ENCODE measurements at regions of chr13 and their contacts with region 1.

Region 1: GRCh38 chr13:43132257-43132656 is 108.9 kb downstream of the DNAJC15 start:
- DNase-seq: peak in 1 of 5 donors; percentile 22
- ATAC-seq: peak; percentile 55 to 76 (median 74)
- H3K4me3 ChIP-seq: no peak overlapping the region
- H3K27ac ChIP-seq: no peak overlapping the region
- H3K4me1 ChIP-seq: peaks cover 0 to 18% (median 5%) of the 10 kb centered on the region in 12 donors
- H3K27me3 ChIP-seq: peaks cover 0 to 3% (median 0%) of the 10 kb centered on the region in 9 donors
- CTCF ChIP-seq: peak in 11 of 12 donors; percentile 14 to 65 (median 45)
- POLR2A ChIP-seq: no peak

Region 2: DNA sequence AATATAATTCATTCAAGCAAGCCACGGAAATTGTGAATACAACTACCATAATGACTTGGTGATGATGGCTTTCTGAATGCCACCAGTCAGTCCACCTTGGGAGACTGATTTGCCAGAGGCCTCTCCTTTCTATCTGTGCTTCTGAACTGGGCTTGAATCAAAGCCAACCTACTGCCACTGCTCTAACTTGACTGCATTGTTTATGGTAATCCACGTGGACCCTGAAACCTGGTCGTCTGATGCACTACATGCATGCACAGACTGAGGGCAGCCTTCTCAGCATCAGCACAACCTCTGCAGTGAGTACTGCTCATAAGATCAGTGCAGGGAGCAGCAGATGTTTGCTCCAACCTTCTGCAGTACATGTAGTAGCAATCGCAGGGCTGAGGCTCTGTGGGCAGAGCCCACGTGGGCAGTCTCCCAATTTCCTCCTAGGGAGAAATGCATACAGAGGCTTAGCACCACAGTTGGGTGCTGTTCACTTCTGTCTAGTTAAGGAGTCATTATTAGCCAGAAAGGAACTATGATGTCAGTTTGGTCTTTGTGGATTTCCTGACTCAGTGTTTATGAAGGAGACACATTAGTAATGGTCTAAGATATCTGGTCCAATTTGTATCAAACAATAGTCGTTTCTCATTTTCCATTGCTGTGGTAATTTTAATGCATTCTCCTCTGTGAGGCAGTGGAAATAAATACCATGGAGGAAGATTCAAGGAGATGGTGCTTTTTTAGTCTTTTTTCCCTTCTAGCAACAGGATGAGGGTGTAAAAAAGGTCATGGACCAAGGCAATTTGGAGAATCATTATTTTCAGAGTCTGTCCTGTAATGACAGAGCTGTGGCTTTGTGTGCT is 777.8 kb before region 1 on chr13:
- intact Hi-C with region 1: no loop called
- DNase-seq: peak in 1 of 5 donors; percentile 42
- ATAC-seq: peak in 3 of 4 donors; percentile 37 to 64 (median 60)
- H3K4me3 ChIP-seq: no peak overlapping the region
- H3K27ac ChIP-seq: peak overlapping the region in 1 of 12 donors; percentile 44
- H3K4me1 ChIP-seq: peaks cover 0 to 21% (median 0%) of the 10 kb centered on the region in 12 donors
- H3K27me3 ChIP-seq: no peaks in the 10 kb centered on the region
- CTCF ChIP-seq: no peak
- POLR2A ChIP-seq: no peak

Region 3: DNA sequence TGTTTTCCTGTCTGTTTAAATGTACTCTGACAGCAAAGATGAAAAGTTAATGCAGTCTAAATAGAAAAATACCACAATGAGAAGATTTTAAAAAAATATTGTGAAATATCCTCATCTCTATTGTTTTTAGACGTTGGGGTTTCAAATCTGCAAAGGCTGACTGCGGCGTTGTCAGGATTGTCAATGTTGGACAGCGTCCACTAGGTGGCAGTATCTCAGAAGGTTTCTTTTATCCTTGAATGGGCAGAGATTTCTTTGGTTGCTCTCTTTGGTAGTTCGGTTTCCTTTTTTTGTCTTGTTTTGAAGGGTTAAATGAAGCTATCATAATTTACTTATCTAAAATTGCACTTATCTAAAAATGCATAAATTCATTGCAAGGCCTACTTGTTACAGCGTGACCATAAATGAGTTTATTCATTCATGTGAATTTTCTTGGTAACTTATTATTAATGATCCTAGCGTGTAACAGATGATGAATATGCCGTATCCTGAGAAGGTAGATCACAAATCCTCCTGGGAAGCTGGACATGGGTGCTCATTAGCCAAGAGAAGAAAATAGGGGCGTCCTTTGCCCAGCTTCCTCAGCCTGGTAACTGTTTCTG is 537.2 kb before region 1 on chr13:
- intact Hi-C with region 1: loop called in 5 of 10 experiments (anchors 5 to 10 kb)
- DNase-seq: peak in 3 of 5 donors; percentile 23 to 37 (median 30)
- ATAC-seq: peak in 2 of 4 donors; percentile 50 to 63
- H3K4me3 ChIP-seq: no peak overlapping the region
- H3K27ac ChIP-seq: no peak overlapping the region
- H3K4me1 ChIP-seq: no peaks in the 10 kb centered on the region
- H3K27me3 ChIP-seq: peaks cover 0 to 27% (median 2%) of the 10 kb centered on the region in 9 donors
- CTCF ChIP-seq: peak; percentile 78 to 89 (median 85)
- POLR2A ChIP-seq: no peak

Region 4: DNA sequence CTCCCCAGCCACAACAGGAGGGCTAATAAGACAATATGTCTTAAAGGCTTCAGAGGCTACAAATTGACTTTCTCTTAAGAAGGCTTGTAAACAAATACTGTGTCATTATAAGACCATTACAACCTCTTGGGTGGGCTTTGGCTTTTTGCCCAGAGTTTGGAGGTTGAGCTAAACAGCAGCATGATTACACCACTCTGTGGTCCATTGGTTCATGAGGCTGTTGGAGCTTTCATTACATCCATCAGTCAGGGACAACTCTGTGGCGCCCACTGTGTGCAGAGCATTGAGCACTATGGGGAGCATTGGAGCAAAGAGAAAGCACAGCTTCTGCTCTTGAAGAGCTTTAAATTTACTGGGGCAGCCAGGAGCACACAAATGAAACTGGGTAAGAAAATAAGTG is 482.4 kb before region 1 on chr13:
- intact Hi-C with region 1: loop called in 2 of 10 experiments (anchors 10 kb)
- DNase-seq: no peak
- ATAC-seq: no peak
- H3K4me3 ChIP-seq: no peak overlapping the region
- H3K27ac ChIP-seq: no peak overlapping the region
- H3K4me1 ChIP-seq: no peaks in the 10 kb centered on the region
- H3K27me3 ChIP-seq: peaks cover 0 to 17% (median 4%) of the 10 kb centered on the region in 9 donors
- CTCF ChIP-seq: no peak
- POLR2A ChIP-seq: no peak

Region 5: GRCh38 chr13:42660333-42660965 is 471.8 kb before region 1 on chr13:
- intact Hi-C with region 1: loop called in 4 of 10 experiments (anchors 5 to 10 kb)
- DNase-seq: no peak
- ATAC-seq: no peak
- H3K4me3 ChIP-seq: no peak overlapping the region
- H3K27ac ChIP-seq: no peak overlapping the region
- H3K4me1 ChIP-seq: no peaks in the 10 kb centered on the region
- H3K27me3 ChIP-seq: peaks cover 0 to 19% (median 0%) of the 10 kb centered on the region in 9 donors
- CTCF ChIP-seq: peak in 9 of 12 donors; percentile 24 to 47 (median 32)
- POLR2A ChIP-seq: no peak

Region 6: GRCh38 chr13:42836930-42837690 is 295.1 kb before region 1 on chr13:
- intact Hi-C with region 1: loop called in 4 of 10 experiments (anchors 2 to 10 kb)
- DNase-seq: no peak
- ATAC-seq: peak in 1 of 4 donors; percentile 50
- H3K4me3 ChIP-seq: no peak overlapping the region
- H3K27ac ChIP-seq: no peak overlapping the region
- H3K4me1 ChIP-seq: peaks cover 0 to 5% (median 0%) of the 10 kb centered on the region in 12 donors
- H3K27me3 ChIP-seq: no peaks in the 10 kb centered on the region
- CTCF ChIP-seq: peak in 10 of 12 donors; percentile 9 to 48 (median 22)
- POLR2A ChIP-seq: no peak

Region 7: DNA sequence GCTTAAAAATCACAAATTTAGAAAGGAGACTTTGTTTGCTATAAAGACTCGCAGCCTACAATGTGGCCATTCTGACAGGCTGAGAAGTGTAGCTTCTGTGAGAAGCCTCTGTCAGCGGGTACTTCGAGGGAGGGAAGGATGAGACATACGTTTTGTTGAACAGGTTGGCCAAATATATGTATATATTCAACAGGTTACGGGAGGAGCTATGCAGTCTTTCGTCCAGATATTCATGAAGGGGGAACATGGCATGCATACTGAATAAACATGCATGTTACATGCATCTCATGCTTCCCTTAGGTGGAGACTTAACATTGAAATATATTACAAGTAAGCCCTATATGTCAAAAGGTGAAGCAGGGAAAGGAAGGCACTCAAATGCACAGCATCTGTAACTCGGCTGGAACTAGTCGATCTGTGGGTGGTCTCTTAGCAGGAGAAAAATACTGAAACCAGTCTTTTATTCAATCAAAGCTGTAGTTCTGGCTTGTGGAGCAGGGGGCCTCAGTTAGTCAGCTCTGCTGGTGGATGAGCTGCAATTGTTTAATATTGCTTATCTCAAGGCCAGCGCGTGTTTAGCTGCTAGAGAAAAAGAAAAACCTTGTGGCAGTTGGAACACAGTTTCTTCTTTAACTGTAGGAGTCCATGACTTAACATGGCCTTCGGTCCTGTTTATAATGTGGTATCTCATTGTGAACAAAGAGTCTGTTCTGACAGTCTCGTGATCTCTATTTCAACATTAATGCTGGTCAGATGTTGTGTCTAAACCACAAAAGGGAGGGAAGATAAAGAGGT is 256.6 kb before region 1 on chr13:
- intact Hi-C with region 1: no loop called
- DNase-seq: no peak
- ATAC-seq: no peak
- H3K4me3 ChIP-seq: no peak overlapping the region
- H3K27ac ChIP-seq: no peak overlapping the region
- H3K4me1 ChIP-seq: peaks cover 0 to 28% (median 0%) of the 10 kb centered on the region in 12 donors
- H3K27me3 ChIP-seq: no peaks in the 10 kb centered on the region
- CTCF ChIP-seq: peak in 2 of 12 donors; percentile 6 to 18
- POLR2A ChIP-seq: no peak

Region 8: DNA sequence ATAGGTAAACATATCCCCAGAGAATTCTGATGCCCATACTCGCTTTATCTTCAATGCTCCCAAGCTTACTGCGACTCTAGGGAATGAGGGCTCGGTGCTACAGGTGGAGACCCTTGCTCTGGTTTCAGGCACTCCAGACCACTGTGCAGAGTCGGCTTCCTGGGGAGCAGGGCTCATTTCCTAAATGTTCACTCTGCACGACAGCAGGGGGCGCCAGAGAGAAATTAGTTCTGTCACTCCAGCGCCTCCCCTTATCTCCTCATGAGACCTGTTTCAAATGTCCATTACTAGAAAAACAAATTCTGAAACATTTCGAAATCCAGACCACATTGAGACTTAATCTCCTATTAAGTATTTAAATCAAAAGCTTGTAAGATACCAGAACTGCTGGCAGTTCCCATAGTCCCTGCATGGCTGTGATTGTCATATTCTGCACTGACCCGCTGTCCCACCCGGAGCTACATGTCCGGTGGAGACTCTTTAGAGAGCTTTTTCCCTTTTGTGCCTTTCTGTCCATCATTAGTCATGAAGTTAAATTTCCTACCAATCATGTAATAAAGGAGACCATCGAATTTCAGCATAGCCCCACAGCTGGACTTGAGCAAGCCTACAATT is 162.6 kb before region 1 on chr13:
- intact Hi-C with region 1: loop called in 9 of 10 experiments (anchors 2 to 5 kb)
- DNase-seq: peak; percentile 70 to 86 (median 83)
- ATAC-seq: peak; percentile 71 to 92 (median 88)
- H3K4me3 ChIP-seq: no peak overlapping the region
- H3K27ac ChIP-seq: no peak overlapping the region
- H3K4me1 ChIP-seq: peaks cover 0 to 34% (median 10%) of the 10 kb centered on the region in 12 donors
- H3K27me3 ChIP-seq: no peaks in the 10 kb centered on the region
- CTCF ChIP-seq: peak; percentile 70 to 88 (median 82)
- POLR2A ChIP-seq: no peak

Region 9: GRCh38 chr13:43085545-43085944 is 46.7 kb before region 1 on chr13:
- intact Hi-C with region 1: loop called in 2 of 10 experiments (anchors 5 kb)
- DNase-seq: no peak
- ATAC-seq: no peak
- H3K4me3 ChIP-seq: no peak overlapping the region
- H3K27ac ChIP-seq: no peak overlapping the region
- H3K4me1 ChIP-seq: peaks cover 0 to 22% (median 0%) of the 10 kb centered on the region in 12 donors
- H3K27me3 ChIP-seq: no peaks in the 10 kb centered on the region
- CTCF ChIP-seq: peak; percentile 59 to 75 (median 68)
- POLR2A ChIP-seq: no peak

Region 10: GRCh38 chr13:43261001-43261400 is 128.7 kb after region 1 on chr13:
- intact Hi-C with region 1: no loop called
- DNase-seq: no peak
- ATAC-seq: no peak
- H3K4me3 ChIP-seq: no peak overlapping the region
- H3K27ac ChIP-seq: no peak overlapping the region
- H3K4me1 ChIP-seq: no peaks in the 10 kb centered on the region
- H3K27me3 ChIP-seq: no peaks in the 10 kb centered on the region
- CTCF ChIP-seq: no peak
- POLR2A ChIP-seq: no peak